Psoas muscle (tissue), 8 donors: ENCODE measurements at regions of chr3 and their contacts with region 1.

Region 1: GRCh38 chr3:49294343-49294742 is 17.3 kb upstream of the C3orf62 start:
- DNase-seq: no peak
- ATAC-seq: peak in 3 of 4 donors; percentile 13 to 30 (median 19)
- H3K4me3 ChIP-seq: no peak overlapping the region
- H3K27ac ChIP-seq: peak overlapping the region; percentile 55
- H3K4me1 ChIP-seq: peaks cover 34% of the 10 kb centered on the region
- H3K27me3 ChIP-seq: no peaks in the 10 kb centered on the region
- CTCF ChIP-seq: no peak

Region 2: DNA sequence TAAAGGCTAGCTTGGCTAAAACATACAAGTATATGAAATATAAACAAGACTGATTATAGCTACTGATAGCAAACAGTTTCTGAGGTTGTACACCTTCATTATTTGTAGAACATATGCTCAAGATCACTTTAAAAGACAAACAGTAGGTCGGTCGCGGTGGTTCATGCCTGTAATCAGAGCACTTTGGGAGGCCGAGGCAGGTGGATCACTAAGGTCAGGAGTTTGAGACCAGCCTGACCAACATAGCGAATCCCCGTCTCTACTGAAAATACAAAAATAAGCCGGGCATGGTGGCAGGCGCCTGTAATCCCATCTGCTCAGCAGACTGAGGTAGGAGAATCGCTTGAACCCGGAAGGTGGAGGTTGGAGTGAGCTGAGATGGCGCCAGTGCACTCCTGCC is 1593.0 kb before region 1 on chr3:
- intact Hi-C with region 1: no loop called
- DNase-seq: no peak
- ATAC-seq: no peak
- H3K4me3 ChIP-seq: no peak overlapping the region
- H3K27ac ChIP-seq: no peak overlapping the region
- H3K4me1 ChIP-seq: no peaks in the 10 kb centered on the region
- H3K27me3 ChIP-seq: no peaks in the 10 kb centered on the region
- CTCF ChIP-seq: no peak

Region 3: GRCh38 chr3:48784426-48785120 is 509.8 kb before region 1 on chr3:
- intact Hi-C with region 1: no loop called
- DNase-seq: no peak
- ATAC-seq: peak; percentile 89 to 96 (median 94)
- H3K4me3 ChIP-seq: peak overlapping the region; percentile 14
- H3K27ac ChIP-seq: peak overlapping the region; percentile 77
- H3K4me1 ChIP-seq: peaks cover 20% of the 10 kb centered on the region
- H3K27me3 ChIP-seq: no peaks in the 10 kb centered on the region
- CTCF ChIP-seq: no peak

Region 4: GRCh38 chr3:49327485-49327884 is 33.1 kb after region 1 on chr3:
- intact Hi-C with region 1: no loop called
- DNase-seq: no peak
- ATAC-seq: no peak
- H3K4me3 ChIP-seq: no peak overlapping the region
- H3K27ac ChIP-seq: no peak overlapping the region
- H3K4me1 ChIP-seq: no peaks in the 10 kb centered on the region
- H3K27me3 ChIP-seq: no peaks in the 10 kb centered on the region
- CTCF ChIP-seq: no peak

Region 5: DNA sequence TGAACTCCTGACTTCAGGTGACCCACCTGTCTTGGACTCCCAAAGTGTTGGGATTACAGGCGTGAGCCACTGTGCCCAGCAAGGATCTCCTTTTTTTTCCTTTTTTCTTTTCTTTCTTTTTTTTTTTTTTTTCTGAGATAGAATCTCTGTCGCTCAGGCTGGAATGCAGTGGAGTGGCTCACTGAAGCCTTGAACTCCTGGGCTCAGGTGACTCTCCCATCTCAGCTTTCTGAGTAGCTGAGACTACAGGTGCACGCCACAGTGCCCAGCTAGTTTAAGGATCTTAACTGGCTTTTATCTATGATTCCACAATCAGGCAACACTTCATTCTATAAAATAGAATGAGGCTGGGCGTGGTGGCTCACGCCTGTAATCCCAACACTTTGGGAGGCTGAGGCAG is 151.0 kb after region 1 on chr3:
- intact Hi-C with region 1: loop called in 1 of 2 experiments (anchors 5 kb)
- DNase-seq: no peak
- ATAC-seq: no peak
- H3K4me3 ChIP-seq: no peak overlapping the region
- H3K27ac ChIP-seq: no peak overlapping the region
- H3K4me1 ChIP-seq: peaks cover 10% of the 10 kb centered on the region
- H3K27me3 ChIP-seq: no peaks in the 10 kb centered on the region
- CTCF ChIP-seq: no peak